Psoas muscle (tissue), 8 donors: ENCODE measurements at regions of chr12 and their contacts with region 1.

Region 1: GRCh38 chr12:128823916-128824839 is at the start of gene SLC15A4:
- DNase-seq: peak; percentile 98
- ATAC-seq: peak; percentile 93 to 94 (median 93)
- H3K4me3 ChIP-seq: peak within 1 kb of the TSS; percentile 95
- H3K27ac ChIP-seq: peak within 1 kb of the TSS; percentile 95
- H3K4me1 ChIP-seq: peaks cover 41% of the 10 kb centered on the region
- H3K27me3 ChIP-seq: no peaks in the 10 kb centered on the region
- CTCF ChIP-seq: no peak
- total RNA-seq, gene SLC15A4: 21.9 to 54.0 (median 31.9) TPM

Region 2: DNA sequence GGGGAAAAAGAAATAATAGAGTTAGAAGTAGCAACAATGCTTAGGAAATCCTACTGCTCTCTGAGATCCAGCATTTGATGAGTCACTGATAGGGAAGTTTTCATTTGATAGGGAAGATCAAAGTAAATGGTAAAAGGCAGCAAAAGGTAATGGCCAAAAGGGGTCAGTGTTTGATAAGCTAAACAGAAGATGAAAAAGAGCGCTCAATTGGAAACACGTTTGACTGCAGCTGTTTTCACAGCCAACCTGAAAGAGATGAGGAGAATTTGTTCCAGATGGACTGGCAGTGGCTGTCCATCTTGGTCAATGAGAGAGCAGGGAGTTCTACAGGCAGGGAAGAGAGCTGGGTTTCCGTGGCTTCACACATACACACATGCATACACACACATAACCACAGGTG is 293.0 kb before region 1 on chr12:
- intact Hi-C with region 1: no loop called
- DNase-seq: no peak
- ATAC-seq: no peak
- H3K4me3 ChIP-seq: no peak overlapping the region
- H3K27ac ChIP-seq: no peak overlapping the region
- H3K4me1 ChIP-seq: no peaks in the 10 kb centered on the region
- H3K27me3 ChIP-seq: peaks cover 0 to 2% (median 0%) of the 10 kb centered on the region in 3 donors
- CTCF ChIP-seq: no peak

Region 3: GRCh38 chr12:128570191-128571065 is 253.8 kb before region 1 on chr12:
- intact Hi-C with region 1: no loop called
- DNase-seq: no peak
- ATAC-seq: no peak
- H3K4me3 ChIP-seq: no peak overlapping the region
- H3K27ac ChIP-seq: no peak overlapping the region
- H3K4me1 ChIP-seq: no peaks in the 10 kb centered on the region
- H3K27me3 ChIP-seq: no peaks in the 10 kb centered on the region
- CTCF ChIP-seq: no peak

Region 4: DNA sequence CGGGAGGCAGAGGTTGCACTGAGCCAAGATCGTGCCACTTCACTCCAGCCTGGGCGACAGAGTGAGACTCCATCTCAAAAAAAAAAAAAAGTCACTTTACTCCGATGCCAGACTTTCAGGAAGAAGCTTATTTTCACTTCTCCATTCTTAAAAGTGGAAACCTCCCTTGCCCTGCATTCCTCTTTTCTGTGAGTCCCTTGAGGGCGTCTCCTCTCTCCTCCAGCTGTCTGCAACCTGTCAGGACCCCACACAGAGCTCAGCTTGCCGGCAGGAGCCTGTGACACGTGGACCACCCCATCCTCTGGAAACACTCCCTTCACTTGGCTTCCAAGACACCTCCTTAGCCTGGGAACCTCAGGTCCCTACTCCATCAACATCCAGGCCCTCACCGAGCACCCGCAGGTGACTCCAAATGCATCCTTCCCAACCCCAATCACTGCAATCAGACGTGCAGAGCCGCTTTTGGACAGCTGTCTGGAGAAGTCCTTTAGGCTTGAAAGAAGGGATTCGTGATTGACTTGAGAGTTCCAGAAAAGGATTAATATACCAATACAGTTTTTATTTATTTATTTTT is 34.7 kb before region 1 on chr12:
- intact Hi-C with region 1: loop called in 1 of 2 experiments (anchors 5 kb)
- DNase-seq: no peak
- ATAC-seq: peak in 2 of 4 donors; percentile 3 to 15
- H3K4me3 ChIP-seq: no peak overlapping the region
- H3K27ac ChIP-seq: no peak overlapping the region
- H3K4me1 ChIP-seq: no peaks in the 10 kb centered on the region
- H3K27me3 ChIP-seq: no peaks in the 10 kb centered on the region
- CTCF ChIP-seq: no peak

Region 5: GRCh38 chr12:128797119-128798118 is 26.8 kb before region 1 on chr12:
- intact Hi-C with region 1: loop called in 1 of 2 experiments (anchors 2 kb)
- DNase-seq: peak in 1 of 2 donors; percentile 52
- ATAC-seq: peak in 3 of 4 donors; percentile 39 to 50 (median 47)
- H3K4me3 ChIP-seq: no peak overlapping the region
- H3K27ac ChIP-seq: peak overlapping the region; percentile 78
- H3K4me1 ChIP-seq: peaks cover 61% of the 10 kb centered on the region
- H3K27me3 ChIP-seq: no peaks in the 10 kb centered on the region
- CTCF ChIP-seq: no peak